ENCODE measurements at regions of chr14 and their contacts with region 1.

Region 1: GRCh38 chr14:54347997-54348611 is 48.7 kb upstream of the CDKN3 start:
- DNase-seq: no peak
- ATAC-seq: peak; percentile 42
- H3K4me3 Mint-ChIP-seq: no peak overlapping the region
- H3K27ac Mint-ChIP-seq: no peak overlapping the region
- H3K4me1 Mint-ChIP-seq: peaks cover 5% of the 10 kb centered on the region
- H3K27me3 Mint-ChIP-seq: peaks cover 3% of the 10 kb centered on the region

Region 2: GRCh38 chr14:53430870-53431269 is 917.2 kb before region 1 on chr14:
- CTCF ChIA-PET with region 1: interaction called, 10 read pairs
- POLR2A ChIA-PET with region 1: no interaction called
- DNase-seq: no peak
- ATAC-seq: no peak
- H3K4me3 Mint-ChIP-seq: no peak overlapping the region
- H3K27ac Mint-ChIP-seq: no peak overlapping the region
- H3K4me1 Mint-ChIP-seq: no peaks in the 10 kb centered on the region
- H3K27me3 Mint-ChIP-seq: peaks cover 2% of the 10 kb centered on the region

Region 3: GRCh38 chr14:53539489-53540126 is 808.5 kb before region 1 on chr14:
- CTCF ChIA-PET with region 1: interaction called, 11 read pairs
- POLR2A ChIA-PET with region 1: no interaction called
- DNase-seq: peak; percentile 64
- ATAC-seq: no peak
- H3K4me3 Mint-ChIP-seq: no peak overlapping the region
- H3K27ac Mint-ChIP-seq: no peak overlapping the region
- H3K4me1 Mint-ChIP-seq: no peaks in the 10 kb centered on the region
- H3K27me3 Mint-ChIP-seq: no peaks in the 10 kb centered on the region

Region 4: DNA sequence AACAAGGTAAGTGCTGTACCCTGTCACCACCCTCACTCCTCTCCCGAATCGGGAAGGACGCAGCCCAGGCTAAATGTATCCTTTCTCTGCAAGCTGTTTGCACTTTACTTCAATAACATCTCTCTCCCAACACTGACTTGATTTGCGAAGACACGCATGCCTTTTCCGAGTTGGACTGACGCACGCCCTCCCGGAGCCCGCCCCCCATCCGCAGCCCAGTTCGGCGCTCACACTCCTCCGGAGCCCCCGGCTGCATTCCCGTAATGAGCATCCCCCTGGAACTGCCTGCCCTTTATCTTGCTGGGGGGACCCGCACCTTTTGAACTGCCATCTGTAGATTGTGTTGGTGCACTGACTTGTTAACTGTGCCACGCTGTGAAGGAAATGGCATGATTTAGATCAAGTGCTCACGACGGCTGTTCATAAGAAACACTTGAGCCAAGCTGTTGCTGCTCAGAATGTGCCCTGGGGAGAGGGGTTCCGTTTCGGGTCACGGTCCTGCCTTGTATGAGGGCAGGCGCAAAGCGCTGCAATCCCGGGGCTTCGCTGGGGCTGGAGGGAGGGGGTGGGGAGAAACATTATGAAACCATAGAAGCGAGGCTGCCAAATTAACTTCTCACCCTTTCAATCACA is 127.9 kb before region 1 on chr14:
- CTCF ChIA-PET with region 1: no interaction called
- POLR2A ChIA-PET with region 1: no interaction called
- DNase-seq: no peak
- ATAC-seq: no peak
- H3K4me3 Mint-ChIP-seq: no peak overlapping the region
- H3K27ac Mint-ChIP-seq: no peak overlapping the region
- H3K4me1 Mint-ChIP-seq: peaks cover 8% of the 10 kb centered on the region
- H3K27me3 Mint-ChIP-seq: peaks cover 64% of the 10 kb centered on the region

Region 5: GRCh38 chr14:54329082-54329695 is 18.9 kb before region 1 on chr14:
- CTCF ChIA-PET with region 1: interaction called, 14 read pairs
- POLR2A ChIA-PET with region 1: no interaction called
- DNase-seq: peak; percentile 25
- ATAC-seq: peak; percentile 55
- H3K4me3 Mint-ChIP-seq: no peak overlapping the region
- H3K27ac Mint-ChIP-seq: no peak overlapping the region
- H3K4me1 Mint-ChIP-seq: no peaks in the 10 kb centered on the region
- H3K27me3 Mint-ChIP-seq: peaks cover 11% of the 10 kb centered on the region

Measured in activated CD8-positive, alpha-beta T cell treated with anti-CD3 and anti-CD28 coated beads, Interleukin-2, amount 10 ng/mL, durations not matched to agents 7 days and 5 days (primary cell).